H1 (cell line): ENCODE measurements at regions of chr17 and their contacts with region 1.

Region 1: GRCh38 chr17:17999364-18000029 is 26.8 kb downstream of the DRC3 start:
- DNase-seq: no peak
- H3K4me3 ChIP-seq: no peak overlapping the region
- H3K27ac ChIP-seq: no peak overlapping the region
- H3K4me1 ChIP-seq: peaks cover 0 to under 1% (median 0%) of the 10 kb centered on the region in 4 experiments; a peak in 2 of 7 replicates
- H3K27me3 ChIP-seq: no peaks in the 10 kb centered on the region
- CTCF ChIP-seq: no peak
- EP300 ChIP-seq: no peak
- POLR2A ChIP-seq: no peak
- RAD21 ChIP-seq: no peak

Region 2: DNA sequence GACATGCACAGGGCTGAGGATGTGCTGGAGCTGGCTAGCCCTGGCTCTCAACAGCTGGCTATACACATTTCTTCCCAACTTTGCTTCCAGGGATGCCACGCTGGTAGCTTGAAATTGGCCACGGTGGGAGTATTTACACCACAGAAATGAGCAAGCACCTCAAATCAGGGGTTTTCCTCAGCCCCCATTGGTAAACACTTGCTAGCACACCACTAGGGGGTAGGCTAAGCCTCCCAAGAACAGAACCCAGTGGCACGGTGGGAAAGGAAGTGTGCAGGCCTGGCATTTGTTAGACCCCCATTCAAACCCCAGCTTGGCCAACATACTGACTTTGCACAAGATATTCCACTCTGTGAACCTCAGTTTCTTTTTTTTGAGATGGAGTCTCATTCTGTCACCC is 13.9 kb before region 1 on chr17:
- CTCF ChIA-PET with region 1: interaction called, 42 read pairs
- POLR2A ChIA-PET with region 1: interaction called, 3 read pairs
- DNase-seq: no peak
- H3K4me3 ChIP-seq: no peak overlapping the region
- H3K27ac ChIP-seq: no peak overlapping the region
- H3K4me1 ChIP-seq: no peaks in the 10 kb centered on the region; a peak in 1 of 7 replicates
- H3K27me3 ChIP-seq: no peaks in the 10 kb centered on the region; a peak in 1 of 7 replicates
- CTCF ChIP-seq: peak; percentile 39 to 53 (median 51)
- EP300 ChIP-seq: no peak
- POLR2A ChIP-seq: no peak
- RAD21 ChIP-seq: peak; percentile 44 to 60

Region 3: GRCh38 chr17:18070861-18071340 is 71.4 kb after region 1 on chr17:
- CTCF ChIA-PET with region 1: no interaction called
- POLR2A ChIA-PET with region 1: no interaction called
- DNase-seq: no peak
- H3K4me3 ChIP-seq: no peak overlapping the region
- H3K27ac ChIP-seq: no peak overlapping the region
- H3K4me1 ChIP-seq: peaks cover 0 to 4% (median 0%) of the 10 kb centered on the region in 4 experiments; a peak in 1 of 7 replicates
- H3K27me3 ChIP-seq: no peaks in the 10 kb centered on the region
- CTCF ChIP-seq: no peak
- EP300 ChIP-seq: no peak
- POLR2A ChIP-seq: no peak
- RAD21 ChIP-seq: no peak

Region 4: GRCh38 chr17:18084256-18084655 is 84.8 kb after region 1 on chr17:
- CTCF ChIA-PET with region 1: no interaction called
- POLR2A ChIA-PET with region 1: no interaction called
- DNase-seq: no peak
- H3K4me3 ChIP-seq: no peak overlapping the region
- H3K27ac ChIP-seq: no peak overlapping the region
- H3K4me1 ChIP-seq: peaks cover 2 to 3% (median 3%) of the 10 kb centered on the region in 4 experiments; a peak in 4 of 7 replicates
- H3K27me3 ChIP-seq: no peaks in the 10 kb centered on the region; a peak in 2 of 7 replicates
- CTCF ChIP-seq: no peak
- EP300 ChIP-seq: no peak
- POLR2A ChIP-seq: no peak
- RAD21 ChIP-seq: no peak